Activated CD8-positive, alpha-beta T cell treated with anti-CD3 and anti-CD28 coated beads for 36 hours (primary cell): ENCODE measurements at regions of chr6 and their contacts with region 1.

Region 1: DNA sequence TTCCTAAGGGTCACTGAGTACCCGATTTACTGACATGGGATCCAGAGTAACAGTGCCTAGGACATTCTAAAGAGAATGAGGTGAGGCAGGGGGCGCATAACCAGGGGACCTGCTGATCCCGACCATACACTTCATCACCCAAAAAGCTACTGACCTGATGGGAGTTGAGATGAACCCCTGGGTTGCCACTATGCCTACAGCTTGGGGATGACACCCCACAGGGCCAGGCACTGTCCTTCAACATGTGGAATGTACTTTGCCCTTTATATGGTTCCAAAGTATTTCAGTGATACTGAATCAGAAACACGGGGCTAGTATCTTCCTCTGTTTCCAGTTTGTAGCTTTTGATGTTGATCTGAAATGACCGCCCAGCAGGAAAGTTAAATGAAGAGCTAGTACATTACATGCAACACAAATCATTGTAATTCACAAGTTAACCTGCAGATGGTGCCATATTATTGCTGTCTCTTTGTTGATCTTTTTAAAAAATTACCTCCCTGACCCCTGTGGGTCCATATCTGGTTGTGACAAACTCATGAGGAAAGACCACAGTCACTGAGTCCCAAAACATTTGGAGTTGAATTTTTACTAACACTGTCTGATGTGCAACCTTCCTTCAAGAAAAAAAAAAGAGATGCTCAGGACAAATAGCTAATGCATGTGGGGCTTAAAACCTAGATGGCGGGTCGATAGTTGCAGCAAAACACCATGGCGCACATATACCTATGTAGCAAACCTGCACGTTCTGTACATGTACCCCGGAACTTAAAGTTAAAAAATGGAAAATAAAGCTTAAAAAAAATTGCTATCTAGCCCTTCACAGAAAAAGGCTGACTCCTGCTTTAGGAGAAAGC is 42.7 kb upstream of the GCNT2 start:
- DNase-seq: no peak
- ATAC-seq: peak; percentile 62
- H3K4me3 Mint-ChIP-seq: no peak overlapping the region
- H3K27ac Mint-ChIP-seq: no peak overlapping the region
- H3K4me1 Mint-ChIP-seq: no peaks in the 10 kb centered on the region
- H3K27me3 Mint-ChIP-seq: peaks cover 3% of the 10 kb centered on the region
- CTCF ChIP-seq: peak; percentile 87

Region 2: DNA sequence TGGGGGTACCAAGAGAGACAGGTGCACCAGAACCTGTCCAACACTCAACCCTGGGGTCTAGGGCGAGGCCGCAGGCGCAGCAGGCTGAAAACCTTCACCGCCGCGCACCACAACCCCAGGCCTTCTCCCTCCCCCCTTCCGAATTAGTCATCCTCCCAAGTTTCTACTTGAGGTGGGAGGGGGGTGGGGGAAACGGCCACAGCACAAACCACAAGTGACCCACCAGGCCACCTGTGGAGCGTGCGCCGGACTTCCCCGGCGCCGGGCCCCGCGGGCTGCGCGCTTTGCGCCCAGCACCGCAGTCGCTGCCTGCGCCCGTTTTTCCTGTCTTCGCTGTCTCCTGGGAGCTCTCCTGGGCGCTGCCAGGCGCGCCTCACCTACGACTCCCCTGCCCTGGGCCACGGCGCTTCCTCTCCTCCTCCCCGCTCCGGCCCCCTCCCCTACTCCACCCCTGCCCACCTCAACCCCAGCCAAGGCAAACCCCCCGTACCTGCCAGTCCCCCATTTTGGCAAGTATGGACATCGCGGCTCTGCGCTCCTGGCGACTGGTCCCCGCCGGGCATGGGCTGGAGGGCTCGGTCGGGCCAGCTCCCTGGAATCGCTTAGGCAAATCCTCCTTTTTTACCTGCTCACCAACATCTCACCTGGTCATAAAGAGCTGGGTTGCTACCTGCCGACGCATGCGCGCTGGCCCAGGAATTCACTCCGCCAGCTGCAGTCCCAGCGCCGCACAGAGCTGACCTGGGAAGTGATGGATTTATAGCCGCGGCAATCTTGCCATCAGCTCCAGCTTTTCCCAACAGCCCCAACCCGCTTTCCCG is 59.3 kb before region 1 on chr6:
- CTCF ChIA-PET with region 1: no interaction called
- POLR2A ChIA-PET with region 1: no interaction called
- intact Hi-C with region 1: no loop called
- DNase-seq: no peak
- ATAC-seq: no peak
- H3K4me3 Mint-ChIP-seq: no peak overlapping the region
- H3K27ac Mint-ChIP-seq: no peak overlapping the region
- H3K4me1 Mint-ChIP-seq: peaks cover 15% of the 10 kb centered on the region
- H3K27me3 Mint-ChIP-seq: peaks cover 90% of the 10 kb centered on the region
- CTCF ChIP-seq: no peak

Region 3: DNA sequence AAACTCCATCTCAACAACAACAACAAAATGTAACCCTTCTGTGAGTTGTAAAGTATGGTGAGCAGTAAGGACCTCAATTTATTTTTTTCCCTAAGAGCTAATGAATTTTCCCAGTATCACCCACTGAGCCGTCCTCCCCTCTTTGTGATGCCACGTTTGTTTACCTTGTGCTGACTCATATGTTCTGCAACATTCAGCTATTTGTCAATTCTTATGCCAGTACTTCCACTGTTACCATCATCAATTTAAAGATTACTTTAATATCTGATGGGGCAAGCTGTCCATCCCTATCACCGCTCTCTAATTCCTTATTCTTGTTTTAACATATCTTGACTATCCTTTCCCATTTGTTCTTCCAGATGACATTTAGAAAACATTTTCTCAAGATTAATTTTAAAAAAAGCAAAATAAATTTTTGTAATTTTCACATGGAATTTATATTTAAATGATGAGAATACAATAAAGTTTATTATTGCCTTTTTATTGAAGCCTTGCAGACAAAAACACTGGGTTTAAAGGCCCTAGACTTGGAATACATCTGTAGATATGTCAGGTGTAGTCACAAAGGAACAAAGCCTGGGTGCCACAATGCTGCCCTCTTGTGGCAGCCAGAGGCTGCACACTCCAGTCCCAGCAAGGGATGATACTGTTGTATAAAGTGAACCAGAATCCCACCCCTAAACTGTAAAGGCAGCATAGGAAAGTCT is 322.6 kb after region 1 on chr6:
- CTCF ChIA-PET with region 1: interaction called, 55 read pairs
- POLR2A ChIA-PET with region 1: no interaction called
- intact Hi-C with region 1: loop called (anchors 2 kb)
- DNase-seq: peak; percentile 62
- ATAC-seq: peak; percentile 94
- H3K4me3 Mint-ChIP-seq: no peak overlapping the region
- H3K27ac Mint-ChIP-seq: no peak overlapping the region
- H3K4me1 Mint-ChIP-seq: no peaks in the 10 kb centered on the region
- H3K27me3 Mint-ChIP-seq: no peaks in the 10 kb centered on the region
- CTCF ChIP-seq: peak; percentile 92

Region 4: DNA sequence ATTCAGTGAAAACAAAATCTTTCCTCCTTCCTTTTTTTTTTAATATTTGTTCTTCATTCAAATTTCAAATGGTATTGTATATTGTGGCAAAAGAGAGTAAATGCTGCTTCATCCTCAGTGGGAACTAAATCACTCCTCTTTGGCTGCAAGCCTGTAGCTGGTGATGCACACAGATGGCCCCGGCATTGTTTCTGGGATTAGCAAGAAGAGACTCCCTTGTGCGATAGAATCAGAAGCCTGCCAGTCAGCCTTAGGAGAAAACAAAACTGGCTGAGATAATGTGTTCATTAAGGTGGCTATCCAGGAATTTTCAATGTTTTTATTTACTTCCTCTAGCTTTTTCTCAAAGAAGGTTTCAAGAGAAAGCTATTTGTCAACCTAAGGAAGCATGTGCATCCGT is 586.4 kb after region 1 on chr6:
- CTCF ChIA-PET with region 1: interaction called, 16 read pairs
- POLR2A ChIA-PET with region 1: no interaction called
- intact Hi-C with region 1: loop called (anchors 10 kb)
- DNase-seq: no peak
- ATAC-seq: no peak
- H3K4me3 Mint-ChIP-seq: no peak overlapping the region
- H3K27ac Mint-ChIP-seq: no peak overlapping the region
- H3K4me1 Mint-ChIP-seq: no peaks in the 10 kb centered on the region
- H3K27me3 Mint-ChIP-seq: peaks cover 8% of the 10 kb centered on the region
- CTCF ChIP-seq: no peak